ENCODE measurements at regions of chr7 and their contacts with region 1.

Region 1: GRCh38 chr7:30406664-30407425 is 71.7 kb downstream of the NOD1 start:
- DNase-seq: no peak
- H3K4me3 ChIP-seq: no peak overlapping the region
- H3K4me3 Mint-ChIP-seq: no peak overlapping the region
- H3K27ac ChIP-seq: no peak overlapping the region
- H3K27ac Mint-ChIP-seq: peak overlapping the region in 2 of 7 donors; percentile 17 to 44
- H3K4me1 ChIP-seq: peaks cover 7 to 9% of the 10 kb centered on the region in 2 donors
- H3K4me1 Mint-ChIP-seq: peaks cover 29% of the 10 kb centered on the region
- H3K27me3 ChIP-seq: no peaks in the 10 kb centered on the region
- H3K27me3 Mint-ChIP-seq: no peaks in the 10 kb centered on the region
- CTCF ChIP-seq: no peak

Region 2: GRCh38 chr7:28955718-28956619 is 1450.9 kb before region 1 on chr7:
- intact Hi-C with region 1: no loop called
- DNase-seq: peak; percentile 41 to 50 (median 44)
- H3K4me3 ChIP-seq: peak overlapping the region; percentile 21 to 74 (median 22)
- H3K4me3 Mint-ChIP-seq: peak overlapping the region; percentile 70 to 86
- H3K27ac ChIP-seq: no peak overlapping the region
- H3K27ac Mint-ChIP-seq: no peak overlapping the region
- H3K4me1 ChIP-seq: peaks cover 37 to 38% of the 10 kb centered on the region in 2 donors
- H3K4me1 Mint-ChIP-seq: peaks cover 29% of the 10 kb centered on the region
- H3K27me3 ChIP-seq: peaks cover 68 to 97% of the 10 kb centered on the region in 2 donors
- H3K27me3 Mint-ChIP-seq: peaks cover 66 to 96% (median 77%) of the 10 kb centered on the region in 3 donors
- CTCF ChIP-seq: peak; percentile 89

Region 3: DNA sequence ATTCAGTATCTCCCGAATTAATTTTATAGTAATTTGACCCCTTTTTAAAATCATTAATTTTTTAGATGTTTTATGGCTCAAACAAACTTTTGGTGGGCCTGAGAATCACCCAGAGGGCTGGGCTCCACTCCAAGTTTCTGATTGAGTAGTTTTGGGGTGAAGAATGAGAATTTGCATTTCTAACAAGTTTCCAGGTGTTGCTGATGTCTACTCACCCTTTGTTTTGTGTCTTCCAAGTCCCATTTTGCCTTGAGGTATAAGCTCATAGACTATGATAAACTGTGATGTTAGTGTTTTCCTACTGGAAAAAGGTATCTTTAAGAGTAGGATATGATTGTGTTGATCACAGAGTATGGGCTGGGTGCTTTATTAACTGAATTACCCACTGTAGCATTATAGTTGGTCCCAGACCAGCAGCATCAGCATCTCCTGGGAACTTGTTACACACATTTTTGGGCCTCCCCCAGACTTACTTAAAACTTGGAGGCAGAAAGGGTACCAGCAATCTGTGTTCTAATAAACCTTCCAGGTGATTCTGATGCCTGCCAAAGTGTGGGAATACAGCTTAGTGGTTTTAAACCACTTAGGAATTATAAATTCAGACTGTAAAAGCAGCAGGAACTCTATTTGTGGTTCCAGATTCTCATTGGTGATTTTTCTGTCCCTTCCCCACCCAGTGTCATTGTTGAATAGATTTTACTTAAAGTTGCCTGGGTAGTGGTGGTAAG is 103.4 kb before region 1 on chr7:
- intact Hi-C with region 1: no loop called
- DNase-seq: no peak
- H3K4me3 ChIP-seq: no peak overlapping the region
- H3K4me3 Mint-ChIP-seq: no peak overlapping the region
- H3K27ac ChIP-seq: no peak overlapping the region
- H3K27ac Mint-ChIP-seq: no peak overlapping the region
- H3K4me1 ChIP-seq: peaks cover 3 to 10% of the 10 kb centered on the region in 2 donors
- H3K4me1 Mint-ChIP-seq: peaks cover 36% of the 10 kb centered on the region
- H3K27me3 ChIP-seq: no peaks in the 10 kb centered on the region
- H3K27me3 Mint-ChIP-seq: no peaks in the 10 kb centered on the region
- CTCF ChIP-seq: no peak

Region 4: GRCh38 chr7:30459591-30460257 is 52.9 kb after region 1 on chr7:
- intact Hi-C with region 1: loop called in 1 of 2 experiments (anchors 10 kb)
- DNase-seq: no peak
- H3K4me3 ChIP-seq: peak overlapping the region in 1 of 3 experiments; percentile 4
- H3K4me3 Mint-ChIP-seq: peak overlapping the region; percentile 10 to 71
- H3K27ac ChIP-seq: peak overlapping the region in 1 of 2 donors; percentile 12
- H3K27ac Mint-ChIP-seq: peak overlapping the region; percentile 17 to 74 (median 65)
- H3K4me1 ChIP-seq: peaks cover 46 to 52% of the 10 kb centered on the region in 2 donors
- H3K4me1 Mint-ChIP-seq: peaks cover 51% of the 10 kb centered on the region
- H3K27me3 ChIP-seq: no peaks in the 10 kb centered on the region
- H3K27me3 Mint-ChIP-seq: peaks cover 0 to 2% (median 1%) of the 10 kb centered on the region in 3 donors
- CTCF ChIP-seq: no peak